ENCODE measurements at regions of chr13 and their contacts with region 1.

Region 1: DNA sequence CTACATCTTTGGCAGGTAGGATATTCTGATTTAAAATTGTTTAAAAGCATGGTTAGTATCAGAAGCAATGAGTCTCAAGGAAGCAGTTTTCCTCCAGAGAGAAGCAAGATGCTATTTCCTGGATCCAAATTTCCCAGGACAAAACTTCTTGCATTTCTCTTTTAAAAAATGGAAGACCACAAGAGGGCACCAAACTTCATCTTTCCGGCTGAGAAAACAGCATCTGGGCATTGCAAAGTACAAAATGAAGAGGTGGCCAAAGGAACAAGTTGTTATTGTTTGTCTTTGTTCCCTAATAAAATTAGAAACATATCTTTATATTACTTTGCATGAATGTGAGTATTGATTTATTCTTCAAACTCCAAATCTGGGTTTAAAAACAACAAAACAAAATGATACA is 60.0 kb upstream of the LRCH1 start:
- DNase-seq: no peak
- H3K4me3 Mint-ChIP-seq: no peak overlapping the region
- H3K27ac Mint-ChIP-seq: no peak overlapping the region
- H3K4me1 Mint-ChIP-seq: no peaks in the 10 kb centered on the region
- H3K27me3 Mint-ChIP-seq: peaks cover 4% of the 10 kb centered on the region

Region 2: DNA sequence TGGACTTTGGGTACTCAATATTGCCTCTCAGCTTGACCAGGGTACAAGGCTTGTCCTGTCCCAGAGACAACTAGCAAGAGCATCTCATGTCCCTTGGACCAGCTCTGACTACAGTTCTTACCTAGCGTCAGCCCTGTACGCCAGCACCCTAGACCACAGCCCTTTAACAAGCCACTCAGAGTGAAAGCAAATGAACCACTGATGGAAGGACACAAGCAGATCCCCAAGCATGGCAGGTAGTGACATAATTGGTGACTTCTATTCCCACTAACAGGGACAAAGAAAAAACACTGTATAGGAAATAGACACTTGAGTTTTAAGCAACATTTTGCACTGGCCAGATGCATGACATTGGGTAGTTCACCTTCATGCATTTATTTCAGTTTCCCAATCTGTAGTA is 51.3 kb after region 1 on chr13:
- CTCF ChIA-PET with region 1: no interaction called
- POLR2A ChIA-PET with region 1: no interaction called
- intact Hi-C with region 1: no loop called
- DNase-seq: no peak
- H3K4me3 Mint-ChIP-seq: no peak overlapping the region
- H3K27ac Mint-ChIP-seq: no peak overlapping the region
- H3K4me1 Mint-ChIP-seq: no peaks in the 10 kb centered on the region
- H3K27me3 Mint-ChIP-seq: peaks cover 3% of the 10 kb centered on the region

Region 3: DNA sequence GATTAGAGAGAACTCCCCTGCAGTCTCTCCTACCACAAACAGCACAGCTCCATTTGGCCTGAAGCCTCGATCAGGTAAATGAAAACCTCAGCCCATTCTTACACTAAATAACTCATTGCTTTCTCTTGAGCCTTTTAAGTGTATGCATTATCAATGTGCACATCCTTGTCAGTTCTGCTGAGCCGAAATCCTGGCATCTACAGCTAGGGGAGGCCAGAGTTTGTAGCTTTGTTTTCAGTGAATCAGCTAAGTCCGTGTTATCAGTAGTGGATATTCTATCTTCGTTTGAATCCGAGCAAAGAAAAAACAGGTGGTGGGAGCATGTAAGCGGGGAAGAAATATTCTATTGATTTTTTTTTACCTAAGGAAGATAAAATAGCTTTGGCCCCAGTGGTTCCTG is 219.6 kb after region 1 on chr13:
- CTCF ChIA-PET with region 1: interaction called, 3 read pairs
- POLR2A ChIA-PET with region 1: no interaction called
- intact Hi-C with region 1: loop called (anchors 5 kb)
- DNase-seq: no peak
- H3K4me3 Mint-ChIP-seq: no peak overlapping the region
- H3K27ac Mint-ChIP-seq: no peak overlapping the region
- H3K4me1 Mint-ChIP-seq: no peaks in the 10 kb centered on the region
- H3K27me3 Mint-ChIP-seq: no peaks in the 10 kb centered on the region

Region 4: DNA sequence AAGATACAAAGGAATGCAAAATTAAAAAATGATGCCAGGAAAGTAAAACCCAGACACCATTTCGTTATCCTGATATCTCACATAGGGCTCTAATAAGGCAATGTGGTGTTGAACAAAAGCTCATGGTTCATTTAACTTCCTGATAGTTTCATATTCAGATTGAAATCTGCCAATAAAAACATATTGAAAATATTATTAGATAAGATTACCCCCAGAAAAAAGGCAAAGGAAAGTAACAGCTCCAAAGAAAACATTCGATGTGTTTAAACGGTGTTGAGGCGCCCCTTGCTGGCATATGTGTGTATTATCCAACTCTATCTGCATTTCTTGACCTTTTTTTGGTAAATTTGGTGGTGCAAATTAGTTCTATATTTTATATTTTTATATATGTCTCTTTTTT is 228.1 kb after region 1 on chr13:
- CTCF ChIA-PET with region 1: interaction called, 19 read pairs
- POLR2A ChIA-PET with region 1: no interaction called
- intact Hi-C with region 1: loop called (anchors 1 kb)
- DNase-seq: peak; percentile 44
- H3K4me3 Mint-ChIP-seq: no peak overlapping the region
- H3K27ac Mint-ChIP-seq: no peak overlapping the region
- H3K4me1 Mint-ChIP-seq: no peaks in the 10 kb centered on the region
- H3K27me3 Mint-ChIP-seq: no peaks in the 10 kb centered on the region

Region 5: GRCh38 chr13:46893798-46894560 is 401.0 kb after region 1 on chr13:
- CTCF ChIA-PET with region 1: no interaction called
- POLR2A ChIA-PET with region 1: no interaction called
- intact Hi-C with region 1: loop called (anchors 5 kb)
- DNase-seq: peak; percentile 72
- H3K4me3 Mint-ChIP-seq: peak overlapping the region; percentile 44
- H3K27ac Mint-ChIP-seq: no peak overlapping the region
- H3K4me1 Mint-ChIP-seq: peaks cover 18% of the 10 kb centered on the region
- H3K27me3 Mint-ChIP-seq: peaks cover 54% of the 10 kb centered on the region

Measured in activated CD4-positive, alpha-beta memory T cell treated with anti-CD3 and anti-CD28 coated beads for 36 hours (primary cell).